Gastrocnemius medialis (tissue), 4 donors: ENCODE measurements at regions of chr2 and their contacts with region 1.

Region 1: GRCh38 chr2:53896864-53897263 is 37.1 kb upstream of the GPR75 start:
- DNase-seq: no peak
- ATAC-seq: peak; percentile 98 to 99
- H3K4me3 ChIP-seq: no peak overlapping the region
- H3K27ac ChIP-seq: peak overlapping the region; percentile 76 to 85 (median 80)
- H3K4me1 ChIP-seq: peaks cover 4 to 8% of the 10 kb centered on the region in 2 donors
- H3K27me3 ChIP-seq: no peaks in the 10 kb centered on the region
- CTCF ChIP-seq: no peak
- POLR2A ChIP-seq: no peak

Region 2: GRCh38 chr2:53939656-53940055 is 42.8 kb after region 1 on chr2:
- in situ Hi-C with region 1: no loop called
- intact Hi-C with region 1: loop called (anchors 5 kb)
- DNase-seq: no peak
- ATAC-seq: peak in 1 of 2 donors; percentile 44
- H3K4me3 ChIP-seq: no peak overlapping the region
- H3K27ac ChIP-seq: peak overlapping the region; percentile 69 to 85 (median 81)
- H3K4me1 ChIP-seq: peaks cover 25 to 31% of the 10 kb centered on the region in 2 donors
- H3K27me3 ChIP-seq: no peaks in the 10 kb centered on the region
- CTCF ChIP-seq: no peak
- POLR2A ChIP-seq: no peak

Region 3: GRCh38 chr2:54081574-54081973 is 184.7 kb after region 1 on chr2:
- in situ Hi-C with region 1: no loop called
- intact Hi-C with region 1: no loop called
- DNase-seq: no peak
- ATAC-seq: no peak
- H3K4me3 ChIP-seq: no peak overlapping the region
- H3K27ac ChIP-seq: no peak overlapping the region
- H3K4me1 ChIP-seq: no peaks in the 10 kb centered on the region
- H3K27me3 ChIP-seq: no peaks in the 10 kb centered on the region
- CTCF ChIP-seq: no peak
- POLR2A ChIP-seq: no peak

Region 4: GRCh38 chr2:54240515-54241469 is 343.9 kb after region 1 on chr2:
- in situ Hi-C with region 1: no loop called
- intact Hi-C with region 1: no loop called
- DNase-seq: peak; percentile 60 to 75
- ATAC-seq: peak; percentile 86 to 92
- H3K4me3 ChIP-seq: no peak overlapping the region
- H3K27ac ChIP-seq: peak overlapping the region; percentile 42 to 57 (median 53)
- H3K4me1 ChIP-seq: peaks cover 15 to 27% of the 10 kb centered on the region in 2 donors
- H3K27me3 ChIP-seq: no peaks in the 10 kb centered on the region
- CTCF ChIP-seq: no peak
- POLR2A ChIP-seq: no peak

Region 5: DNA sequence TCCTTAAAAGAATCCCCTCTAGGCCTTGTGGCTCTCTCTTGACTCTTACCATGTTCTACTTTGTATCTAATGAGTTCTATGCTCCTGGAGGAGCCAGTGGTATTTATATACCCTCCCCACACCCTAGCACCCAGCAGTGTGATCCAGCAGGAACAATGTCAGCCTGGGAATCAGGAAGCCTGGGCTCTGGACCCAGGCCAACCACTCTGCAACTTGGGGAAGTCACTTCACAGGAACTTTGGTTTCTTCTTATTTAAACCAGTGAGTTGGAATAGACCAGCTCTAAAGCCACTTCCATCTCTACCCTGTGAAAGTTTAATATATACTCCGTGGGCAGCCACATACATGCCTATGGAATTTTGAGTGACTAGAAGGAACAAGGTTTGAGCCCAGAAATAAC is 547.6 kb after region 1 on chr2:
- in situ Hi-C with region 1: no loop called
- intact Hi-C with region 1: no loop called
- DNase-seq: no peak
- ATAC-seq: peak in 1 of 2 donors; percentile 24
- H3K4me3 ChIP-seq: no peak overlapping the region
- H3K27ac ChIP-seq: peak overlapping the region in 2 of 4 donors; percentile 0 to 16
- H3K4me1 ChIP-seq: peaks cover 3 to 31% of the 10 kb centered on the region in 2 donors
- H3K27me3 ChIP-seq: no peaks in the 10 kb centered on the region
- CTCF ChIP-seq: no peak
- POLR2A ChIP-seq: no peak